ENCODE measurements at regions of chr9 and their contacts with region 1.

Region 1: DNA sequence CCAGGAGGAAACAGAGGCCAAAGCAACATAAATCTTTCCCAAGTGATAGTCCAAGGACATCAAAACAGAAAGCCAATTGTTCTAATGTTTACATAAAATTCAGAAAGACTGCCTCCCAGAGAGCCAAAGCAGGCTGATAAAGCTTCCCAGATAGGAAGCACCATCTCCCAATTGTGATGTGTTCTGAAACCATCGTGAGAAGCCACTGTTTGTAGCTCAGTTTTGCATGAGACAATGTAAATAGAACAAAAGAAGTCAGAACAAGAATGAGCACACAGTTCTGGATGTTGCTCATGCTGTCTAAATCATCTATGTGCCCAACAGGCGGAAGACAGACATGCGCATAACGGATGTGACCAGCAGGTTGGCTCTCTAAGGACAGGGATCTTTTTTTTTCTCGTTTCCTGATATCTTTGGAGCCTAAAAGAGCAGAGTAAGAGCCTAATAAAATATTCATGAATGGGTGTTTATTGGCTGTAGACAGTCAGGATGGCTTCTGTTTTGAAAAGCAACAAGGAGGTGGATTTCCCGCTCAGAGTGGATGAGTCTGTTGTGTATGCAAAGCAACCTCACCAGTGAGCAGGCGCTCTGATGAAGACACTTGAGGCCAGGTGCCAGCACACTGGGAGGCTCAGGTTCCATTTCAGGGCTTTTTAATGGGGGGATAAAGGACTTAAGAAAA is 113.6 kb downstream of the GNA14 start:
- DNase-seq: no peak
- ATAC-seq: no peak
- H3K4me3 ChIP-seq: no peak overlapping the region
- H3K4me3 Mint-ChIP-seq: no peak overlapping the region
- H3K27ac ChIP-seq: no peak overlapping the region
- H3K27ac Mint-ChIP-seq: no peak overlapping the region
- H3K4me1 ChIP-seq: no peaks in the 10 kb centered on the region
- H3K4me1 Mint-ChIP-seq: no peaks in the 10 kb centered on the region
- H3K27me3 ChIP-seq: no peaks in the 10 kb centered on the region
- H3K27me3 Mint-ChIP-seq: peaks cover 2 to 10% (median 5%) of the 10 kb centered on the region in 5 donors

Region 2: DNA sequence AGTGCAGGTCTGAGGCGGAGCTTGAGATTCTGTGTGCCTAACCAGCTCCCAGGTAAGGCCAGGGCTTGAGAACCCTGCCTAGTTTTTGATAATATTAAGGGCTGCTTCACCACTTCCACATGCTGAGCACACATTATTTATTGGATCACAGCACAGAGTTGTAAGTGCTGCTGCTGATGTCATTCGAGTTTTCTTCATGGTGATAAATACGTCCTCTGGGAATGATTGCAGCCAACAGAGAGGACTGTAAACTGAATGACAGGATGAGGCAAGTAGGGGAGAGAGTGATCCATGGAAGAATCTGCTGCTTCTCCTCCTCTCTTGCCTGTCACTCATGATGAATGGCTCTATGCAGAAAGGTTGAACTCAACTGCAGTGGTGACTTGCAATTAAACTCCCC is 435.1 kb before region 1 on chr9:
- CTCF ChIA-PET with region 1: no interaction called
- POLR2A ChIA-PET with region 1: no interaction called
- intact Hi-C with region 1: loop called in 1 of 2 experiments (anchors 5 kb)
- DNase-seq: no peak
- ATAC-seq: no peak
- H3K4me3 ChIP-seq: no peak overlapping the region
- H3K4me3 Mint-ChIP-seq: no peak overlapping the region
- H3K27ac ChIP-seq: no peak overlapping the region
- H3K27ac Mint-ChIP-seq: no peak overlapping the region
- H3K4me1 ChIP-seq: no peaks in the 10 kb centered on the region
- H3K4me1 Mint-ChIP-seq: no peaks in the 10 kb centered on the region
- H3K27me3 ChIP-seq: peaks cover 0 to 5% of the 10 kb centered on the region in 2 donors
- H3K27me3 Mint-ChIP-seq: peaks cover 1 to 33% (median 18%) of the 10 kb centered on the region in 5 donors

Region 3: GRCh38 chr9:77546376-77546950 is 11.9 kb after region 1 on chr9:
- CTCF ChIA-PET with region 1: no interaction called
- POLR2A ChIA-PET with region 1: no interaction called
- intact Hi-C with region 1: no loop called
- DNase-seq: no peak
- ATAC-seq: no peak
- H3K4me3 ChIP-seq: no peak overlapping the region
- H3K4me3 Mint-ChIP-seq: no peak overlapping the region
- H3K27ac ChIP-seq: no peak overlapping the region
- H3K27ac Mint-ChIP-seq: no peak overlapping the region
- H3K4me1 ChIP-seq: no peaks in the 10 kb centered on the region
- H3K4me1 Mint-ChIP-seq: no peaks in the 10 kb centered on the region
- H3K27me3 ChIP-seq: no peaks in the 10 kb centered on the region
- H3K27me3 Mint-ChIP-seq: peaks cover 0 to 4% (median 2%) of the 10 kb centered on the region in 5 donors